GM12878 (cell line): ENCODE measurements at regions of chr5 and their contacts with region 1.

Region 1: GRCh38 chr5:97162045-97162444 is 19.6 kb upstream of the LIX1 start:
- DNase-seq: peak; percentile 44
- ATAC-seq: peak; percentile 82
- H3K4me3 ChIP-seq: no peak overlapping the region
- H3K27ac ChIP-seq: no peak overlapping the region
- H3K4me1 ChIP-seq: no peaks in the 10 kb centered on the region; the same call in 1 of the 2 replicates
- H3K27me3 ChIP-seq: no peaks in the 10 kb centered on the region
- CTCF ChIP-seq: peak; percentile 77 to 84 (median 82)
- EP300 ChIP-seq: no peak
- POLR2A ChIP-seq: no peak
- RAD21 ChIP-seq: peak; percentile 85

Region 2: DNA sequence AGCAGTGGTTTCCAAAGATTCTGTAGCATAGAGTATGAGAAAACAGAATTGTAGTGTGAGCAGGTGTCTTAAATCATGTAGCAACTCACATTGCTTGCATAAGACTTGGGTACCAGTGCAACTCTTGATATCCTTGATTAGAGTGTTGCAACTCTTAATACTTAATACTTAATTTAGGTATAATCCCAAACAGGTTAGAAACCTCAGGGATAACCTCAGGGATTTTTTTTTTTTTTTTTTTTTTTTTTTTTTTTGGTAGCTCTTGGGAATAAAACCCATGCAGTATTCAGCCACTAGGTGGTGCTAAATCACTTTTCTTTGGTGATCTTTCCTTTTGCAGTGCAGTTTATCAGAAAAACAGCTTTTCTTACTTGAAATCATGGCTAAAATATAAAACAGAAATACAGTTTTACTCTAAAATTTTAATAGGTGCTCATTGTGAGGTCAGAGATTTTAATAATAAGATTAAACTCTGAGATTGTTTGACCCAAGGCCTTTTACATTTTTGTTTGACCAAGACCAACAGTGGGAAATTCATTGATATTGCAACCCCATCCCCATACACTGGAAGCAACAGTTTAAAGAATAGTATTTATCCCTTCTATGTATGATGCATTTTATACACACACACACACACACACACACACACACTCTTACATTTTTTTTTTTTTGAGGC is 409.6 kb before region 1 on chr5:
- CTCF ChIA-PET with region 1: interaction called, 128 read pairs
- POLR2A ChIA-PET with region 1: interaction called, 3 read pairs
- RAD21 ChIA-PET with region 1: interaction called, 52 read pairs
- SMC1A ChIA-PET with region 1: interaction called, 54 read pairs
- in situ Hi-C with region 1: loop called (anchors 5 kb)
- intact Hi-C with region 1: loop called (anchors 1 kb)
- DNase-seq: no peak
- ATAC-seq: peak; percentile 63
- H3K4me3 ChIP-seq: no peak overlapping the region
- H3K27ac ChIP-seq: no peak overlapping the region
- H3K4me1 ChIP-seq: no peaks in the 10 kb centered on the region
- H3K27me3 ChIP-seq: no peaks in the 10 kb centered on the region
- CTCF ChIP-seq: peak; percentile 54 to 61 (median 58); a peak in 5 of 6 replicates
- EP300 ChIP-seq: no peak
- POLR2A ChIP-seq: no peak
- RAD21 ChIP-seq: peak; percentile 65

Region 3: DNA sequence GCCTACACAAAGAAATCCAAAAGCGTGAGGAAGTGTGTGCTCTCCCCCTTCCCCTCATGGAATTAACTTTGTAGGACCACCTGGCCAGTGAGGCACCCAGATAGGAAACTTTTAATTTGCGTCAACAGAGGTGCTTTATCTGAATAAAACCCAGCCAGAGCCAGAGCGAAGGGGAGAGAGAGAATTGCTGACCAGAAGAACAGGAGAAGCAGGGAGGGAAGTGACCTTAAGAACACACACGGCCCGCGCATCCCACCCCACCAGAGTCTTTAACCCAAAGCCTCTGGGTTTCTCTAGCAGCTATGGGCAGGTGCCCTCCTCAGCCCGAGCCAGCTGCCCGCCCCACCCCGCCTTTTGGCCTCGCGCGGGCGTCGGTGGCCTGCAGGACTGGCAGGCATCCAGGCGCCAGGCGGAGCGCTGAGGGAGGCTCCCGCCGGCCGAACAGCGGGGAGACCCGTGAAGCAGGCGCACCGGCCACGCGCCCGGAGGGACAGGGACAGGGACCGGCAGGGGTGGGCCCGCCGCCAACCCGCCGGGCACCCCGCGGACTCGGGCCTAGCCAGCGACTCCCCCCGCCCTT is 354.9 kb before region 1 on chr5:
- CTCF ChIA-PET with region 1: interaction called, 5 read pairs
- POLR2A ChIA-PET with region 1: no interaction called
- RAD21 ChIA-PET with region 1: interaction called, 4 read pairs
- SMC1A ChIA-PET with region 1: interaction called, 9 read pairs
- in situ Hi-C with region 1: no loop called
- intact Hi-C with region 1: loop called (anchors 2 kb)
- DNase-seq: no peak
- ATAC-seq: peak; percentile 65
- H3K4me3 ChIP-seq: peak overlapping the region; percentile 76
- H3K27ac ChIP-seq: peak overlapping the region; percentile 95
- H3K4me1 ChIP-seq: peaks cover 3% of the 10 kb centered on the region
- H3K27me3 ChIP-seq: no peaks in the 10 kb centered on the region
- CTCF ChIP-seq: no peak
- EP300 ChIP-seq: no peak
- POLR2A ChIP-seq: no peak
- RAD21 ChIP-seq: 0 out of 2 replicates have a peak, but pooled peaks have one; percentile 2

Region 4: GRCh38 chr5:96997265-96997859 is 164.7 kb before region 1 on chr5:
- CTCF ChIA-PET with region 1: interaction called, 32 read pairs
- POLR2A ChIA-PET with region 1: no interaction called
- RAD21 ChIA-PET with region 1: interaction called, 28 read pairs
- SMC1A ChIA-PET with region 1: interaction called, 28 read pairs
- in situ Hi-C with region 1: no loop called
- intact Hi-C with region 1: loop called (anchors 2 kb)
- DNase-seq: no peak
- ATAC-seq: peak; percentile 92
- H3K4me3 ChIP-seq: no peak overlapping the region
- H3K27ac ChIP-seq: no peak overlapping the region
- H3K4me1 ChIP-seq: no peaks in the 10 kb centered on the region
- H3K27me3 ChIP-seq: no peaks in the 10 kb centered on the region
- CTCF ChIP-seq: peak; percentile 24 to 40 (median 40); a peak in 4 of 6 replicates
- EP300 ChIP-seq: no peak
- POLR2A ChIP-seq: no peak
- RAD21 ChIP-seq: peak; percentile 47

Region 5: GRCh38 chr5:97094579-97095317 is 67.3 kb before region 1 on chr5:
- CTCF ChIA-PET with region 1: interaction called, 8 read pairs
- POLR2A ChIA-PET with region 1: no interaction called
- RAD21 ChIA-PET with region 1: no interaction called
- SMC1A ChIA-PET with region 1: interaction called, 10 read pairs
- in situ Hi-C with region 1: no loop called
- intact Hi-C with region 1: no loop called
- DNase-seq: peak; percentile 86
- ATAC-seq: peak; percentile 95
- H3K4me3 ChIP-seq: no peak overlapping the region
- H3K27ac ChIP-seq: peak overlapping the region; percentile 86
- H3K4me1 ChIP-seq: peaks cover 26% of the 10 kb centered on the region
- H3K27me3 ChIP-seq: no peaks in the 10 kb centered on the region
- CTCF ChIP-seq: no peak
- EP300 ChIP-seq: peak in 1 of 2 experiments; percentile 96; a peak in 2 of 4 replicates
- POLR2A ChIP-seq: no peak
- RAD21 ChIP-seq: no peak; the same call in 1 of the 2 replicates

Region 6: GRCh38 chr5:97183100-97183929 is 21.3 kb after region 1 on chr5 and contains the start of gene RIOK2:
- CTCF ChIA-PET with region 1: interaction called, 16 read pairs
- POLR2A ChIA-PET with region 1: interaction called, 3 read pairs
- RAD21 ChIA-PET with region 1: interaction called, 3 read pairs
- SMC1A ChIA-PET with region 1: interaction called, 6 read pairs
- in situ Hi-C with region 1: no loop called
- intact Hi-C with region 1: no loop called
- DNase-seq: peak; percentile 96
- ATAC-seq: peak; percentile 95
- H3K4me3 ChIP-seq: peak within 1 kb of the TSS; percentile 99
- H3K27ac ChIP-seq: peak within 1 kb of the TSS; percentile 94
- H3K4me1 ChIP-seq: peaks cover 11% of the 10 kb centered on the region
- H3K27me3 ChIP-seq: no peaks in the 10 kb centered on the region
- CTCF ChIP-seq: no peak
- EP300 ChIP-seq: peak in 1 of 2 experiments; percentile 57; a peak in 1 of 4 replicates
- POLR2A ChIP-seq: peak; percentile 86
- RAD21 ChIP-seq: no peak
- polyA plus RNA-seq, gene RIOK2: 55.9 to 59.3 TPM

Region 7: GRCh38 chr5:97338729-97339128 is 176.7 kb after region 1 on chr5:
- CTCF ChIA-PET with region 1: no interaction called
- POLR2A ChIA-PET with region 1: no interaction called
- RAD21 ChIA-PET with region 1: no interaction called
- SMC1A ChIA-PET with region 1: no interaction called
- in situ Hi-C with region 1: no loop called
- intact Hi-C with region 1: no loop called
- DNase-seq: no peak
- ATAC-seq: no peak
- H3K4me3 ChIP-seq: no peak overlapping the region
- H3K27ac ChIP-seq: no peak overlapping the region
- H3K4me1 ChIP-seq: no peaks in the 10 kb centered on the region
- H3K27me3 ChIP-seq: no peaks in the 10 kb centered on the region
- CTCF ChIP-seq: no peak
- EP300 ChIP-seq: no peak
- POLR2A ChIP-seq: no peak
- RAD21 ChIP-seq: no peak